ENCODE measurements at regions of chr10 and their contacts with region 1.

Region 1: GRCh38 chr10:25522946-25523608 is 348.3 kb downstream of the GPR158 start:
- DNase-seq: peak; percentile 57
- H3K4me3 ChIP-seq: no peak overlapping the region
- H3K27ac ChIP-seq: no peak overlapping the region
- H3K4me1 ChIP-seq: no peaks in the 10 kb centered on the region
- H3K27me3 ChIP-seq: no peaks in the 10 kb centered on the region
- CTCF ChIP-seq: peak; percentile 44 to 51
- POLR2A ChIP-seq: no peak

Region 2: DNA sequence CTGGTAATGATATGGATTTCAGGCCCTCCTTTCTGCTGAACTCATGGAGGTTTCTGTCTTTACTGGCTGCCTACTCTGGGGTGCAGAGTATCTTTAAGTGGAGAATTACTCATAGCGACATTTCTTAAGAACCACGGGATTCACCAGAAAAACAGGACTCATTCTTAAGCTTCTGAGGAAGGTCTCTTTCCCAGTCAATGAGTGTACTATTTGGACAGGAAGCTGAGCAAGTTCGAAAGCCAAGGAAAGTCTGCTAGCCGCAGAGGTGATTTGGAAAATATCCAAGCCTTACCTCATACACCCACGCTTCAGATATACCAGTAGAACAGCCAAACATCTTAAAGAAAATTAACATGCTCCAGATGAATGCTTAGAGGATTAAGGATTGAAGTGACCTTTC is 33.4 kb after region 1 on chr10:
- CTCF ChIA-PET with region 1: interaction called, 3 read pairs
- POLR2A ChIA-PET with region 1: no interaction called
- dilution Hi-C with region 1: no loop called
- intact Hi-C with region 1: loop called (anchors 2 kb)
- DNase-seq: peak; percentile 96
- H3K4me3 ChIP-seq: no peak overlapping the region
- H3K27ac ChIP-seq: peak overlapping the region; percentile 72
- H3K4me1 ChIP-seq: peaks cover 18% of the 10 kb centered on the region
- H3K27me3 ChIP-seq: no peaks in the 10 kb centered on the region
- CTCF ChIP-seq: no peak
- POLR2A ChIP-seq: no peak

Region 3: GRCh38 chr10:25639646-25640045 is 116.6 kb after region 1 on chr10:
- CTCF ChIA-PET with region 1: interaction called, 11 read pairs
- POLR2A ChIA-PET with region 1: no interaction called
- dilution Hi-C with region 1: no loop called
- intact Hi-C with region 1: loop called (anchors 2 kb)
- DNase-seq: no peak
- H3K4me3 ChIP-seq: no peak overlapping the region
- H3K27ac ChIP-seq: no peak overlapping the region
- H3K4me1 ChIP-seq: no peaks in the 10 kb centered on the region
- H3K27me3 ChIP-seq: no peaks in the 10 kb centered on the region
- CTCF ChIP-seq: no peak
- POLR2A ChIP-seq: no peak

Region 4: GRCh38 chr10:25682203-25682851 is 159.2 kb after region 1 on chr10:
- CTCF ChIA-PET with region 1: no interaction called
- POLR2A ChIA-PET with region 1: no interaction called
- dilution Hi-C with region 1: no loop called
- intact Hi-C with region 1: loop called (anchors 2 kb)
- DNase-seq: peak; percentile 20
- H3K4me3 ChIP-seq: no peak overlapping the region
- H3K27ac ChIP-seq: no peak overlapping the region
- H3K4me1 ChIP-seq: no peaks in the 10 kb centered on the region
- H3K27me3 ChIP-seq: no peaks in the 10 kb centered on the region
- CTCF ChIP-seq: peak; percentile 7 to 40
- POLR2A ChIP-seq: no peak

Measured in endothelial cell of umbilical vein (primary cell).